ENCODE measurements at regions of chr16 and their contacts with region 1.

Region 1: DNA sequence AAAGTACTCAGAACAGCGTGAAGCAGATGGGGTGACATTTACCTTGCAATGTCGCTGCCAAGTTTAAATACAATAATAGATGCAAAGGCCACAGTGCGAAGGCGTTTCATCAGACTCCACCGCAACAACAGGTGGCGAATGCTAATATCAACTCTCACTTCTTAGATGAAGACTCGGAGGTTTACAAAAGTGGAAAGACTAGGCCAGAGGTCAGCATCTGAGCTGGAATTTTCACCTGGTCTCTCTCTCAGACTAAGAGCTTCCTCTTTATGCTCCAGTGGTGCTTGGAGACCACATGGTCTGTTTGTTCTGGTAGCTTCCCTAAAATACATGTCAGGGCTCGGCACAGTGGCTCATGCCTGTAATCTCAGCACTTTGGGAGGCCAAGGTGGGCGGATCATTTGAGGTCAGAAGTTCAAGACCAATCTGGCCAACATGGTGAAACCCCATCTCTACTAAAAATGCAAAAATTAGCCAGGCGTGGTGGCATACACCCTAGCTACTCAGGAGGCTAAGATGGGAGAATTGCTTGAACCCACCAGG is 169.1 kb downstream of the XYLT1 start:
- DNase-seq: peak; percentile 99
- H3K4me3 ChIP-seq: peak overlapping the region; percentile 45
- H3K27ac ChIP-seq: peak overlapping the region; percentile 99
- H3K4me1 ChIP-seq: peaks cover 85% of the 10 kb centered on the region
- CTCF ChIP-seq: no peak

Region 2: GRCh38 chr16:16974198-16974597 is 327.5 kb before region 1 on chr16:
- CTCF ChIA-PET with region 1: no interaction called
- POLR2A ChIA-PET with region 1: no interaction called
- intact Hi-C with region 1: no loop called
- DNase-seq: no peak
- H3K4me3 ChIP-seq: no peak overlapping the region
- H3K27ac ChIP-seq: no peak overlapping the region
- H3K4me1 ChIP-seq: no peaks in the 10 kb centered on the region
- CTCF ChIP-seq: no peak

Region 3: DNA sequence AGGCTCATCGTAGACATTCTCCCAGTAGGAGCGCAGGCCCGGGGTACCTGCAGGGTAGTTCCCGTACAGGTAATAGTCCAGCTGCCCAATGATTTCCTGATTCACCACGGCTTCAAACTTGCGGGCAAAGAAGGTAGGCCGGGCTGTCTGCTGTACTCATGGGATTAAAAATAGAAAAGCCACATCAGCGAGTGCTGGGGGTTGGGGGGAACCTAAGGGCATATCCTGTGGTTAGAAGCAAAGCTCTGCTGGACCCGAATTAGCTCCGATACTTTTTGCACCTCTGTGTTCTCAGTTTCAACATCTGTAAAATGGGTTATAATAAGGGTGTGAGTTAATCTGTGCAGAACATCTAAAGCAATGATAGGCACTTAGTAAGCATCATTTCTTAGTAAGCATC is 167.1 kb before region 1 on chr16:
- CTCF ChIA-PET with region 1: no interaction called
- POLR2A ChIA-PET with region 1: no interaction called
- intact Hi-C with region 1: loop called (anchors 2 kb)
- DNase-seq: peak; percentile 66
- H3K4me3 ChIP-seq: no peak overlapping the region
- H3K27ac ChIP-seq: peak overlapping the region; percentile 42
- H3K4me1 ChIP-seq: peaks cover 40% of the 10 kb centered on the region
- CTCF ChIP-seq: no peak

Region 4: DNA sequence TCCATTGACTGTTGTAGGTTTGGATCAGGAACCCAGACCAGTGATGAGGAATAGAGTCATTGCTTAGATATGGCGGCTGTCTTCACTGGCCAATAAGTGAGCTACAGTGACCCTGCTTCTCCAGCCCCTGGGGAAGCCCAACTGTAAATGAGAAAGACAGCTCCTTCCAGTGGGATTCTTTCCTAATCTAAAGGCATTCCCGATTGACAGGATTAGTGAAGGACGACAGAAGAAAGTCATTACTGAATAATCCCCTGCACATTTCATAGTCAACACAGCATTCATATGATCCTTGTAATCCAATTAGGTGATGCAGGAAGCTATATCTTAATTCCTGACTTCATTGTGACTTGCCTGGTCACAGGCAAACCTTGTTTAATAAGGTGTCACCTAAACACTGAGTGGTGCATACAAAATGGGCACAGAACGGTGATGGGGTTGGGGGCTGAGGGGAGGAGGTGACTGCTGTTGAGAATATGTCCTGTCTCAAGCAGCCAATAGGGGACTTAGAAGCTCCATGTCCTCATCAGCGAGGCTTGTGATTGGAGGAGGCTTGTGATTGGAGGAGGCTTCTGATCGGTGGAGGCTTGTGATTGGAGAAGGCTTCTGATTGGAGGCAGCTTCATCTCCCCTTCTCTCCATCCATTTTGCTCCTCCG is 73.5 kb before region 1 on chr16:
- CTCF ChIA-PET with region 1: no interaction called
- POLR2A ChIA-PET with region 1: no interaction called
- intact Hi-C with region 1: no loop called
- DNase-seq: no peak
- H3K4me3 ChIP-seq: no peak overlapping the region
- H3K27ac ChIP-seq: no peak overlapping the region
- H3K4me1 ChIP-seq: peaks cover 28% of the 10 kb centered on the region
- CTCF ChIP-seq: no peak

Region 5: DNA sequence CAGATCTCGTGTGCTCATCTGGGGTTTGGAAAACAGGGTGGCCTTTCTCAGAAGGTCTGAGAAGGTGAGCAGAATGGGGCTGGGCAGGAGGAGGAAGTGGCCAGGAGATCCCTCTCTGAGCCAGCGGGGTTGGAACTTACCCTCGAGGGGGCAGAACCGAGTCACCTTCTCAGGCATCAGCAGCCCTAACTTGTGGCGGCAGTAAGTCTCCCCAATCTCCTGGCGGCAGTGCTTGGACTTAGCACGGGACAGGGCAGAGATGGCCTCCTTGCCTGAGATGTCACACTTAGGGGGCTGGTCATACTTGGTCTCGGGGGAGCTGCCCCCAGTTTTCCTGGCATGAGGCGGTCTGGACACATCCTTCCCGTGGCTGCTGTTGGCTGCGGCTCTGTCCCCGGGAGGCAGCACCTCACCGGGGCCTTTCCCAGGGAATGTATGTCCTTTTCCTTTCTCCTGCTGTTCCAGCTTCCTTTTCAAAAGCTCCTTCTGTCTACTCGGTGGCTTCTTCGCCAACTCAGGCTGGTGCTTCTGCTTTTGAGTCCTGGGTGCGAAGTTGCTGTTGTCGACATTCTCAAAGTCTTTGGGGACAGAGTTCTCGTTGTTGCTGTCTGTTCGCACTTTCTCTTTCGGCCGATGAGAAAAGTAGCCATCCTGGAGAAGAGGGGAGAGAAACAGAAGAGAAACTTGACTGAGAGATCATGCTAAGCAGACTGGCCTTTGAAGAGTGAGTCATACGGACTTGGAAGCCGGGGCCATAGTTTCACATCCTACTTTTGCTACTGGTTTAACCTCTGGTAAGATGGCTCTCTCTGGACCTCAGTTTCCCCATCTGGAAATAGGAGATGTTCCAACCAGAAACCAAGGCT is 42.6 kb before region 1 on chr16:
- CTCF ChIA-PET with region 1: no interaction called
- POLR2A ChIA-PET with region 1: interaction called, 7 read pairs
- intact Hi-C with region 1: loop called (anchors 2 kb)
- DNase-seq: peak; percentile 64
- H3K4me3 ChIP-seq: peak overlapping the region; percentile 10
- H3K27ac ChIP-seq: peak overlapping the region; percentile 50
- H3K4me1 ChIP-seq: peaks cover 33% of the 10 kb centered on the region
- CTCF ChIP-seq: peak; percentile 66

Region 6: DNA sequence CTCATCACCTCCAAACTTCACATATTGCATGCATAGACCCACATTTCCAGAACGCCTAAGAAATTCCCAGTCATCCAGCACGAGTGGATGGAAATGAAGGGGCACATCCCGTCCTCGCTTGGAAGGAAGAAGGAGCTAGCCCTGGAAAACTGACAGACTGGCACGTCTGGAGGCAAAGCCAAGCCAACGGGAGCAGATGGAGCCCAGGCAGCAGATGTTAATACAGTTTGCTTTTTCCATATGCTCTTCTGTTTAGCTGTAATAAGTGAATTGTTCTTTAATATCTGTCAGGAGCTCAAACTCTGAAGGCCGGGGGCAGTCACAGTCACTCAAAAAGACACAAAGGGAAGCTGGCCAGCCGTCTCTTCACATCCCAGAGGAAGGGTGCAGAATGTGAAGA is 18.6 kb before region 1 on chr16:
- CTCF ChIA-PET with region 1: interaction called, 8 read pairs
- POLR2A ChIA-PET with region 1: interaction called, 47 read pairs
- intact Hi-C with region 1: loop called (anchors 1 kb)
- DNase-seq: no peak
- H3K4me3 ChIP-seq: peak overlapping the region; percentile 48
- H3K27ac ChIP-seq: peak overlapping the region; percentile 60
- H3K4me1 ChIP-seq: peaks cover 83% of the 10 kb centered on the region
- CTCF ChIP-seq: no peak

Region 7: GRCh38 chr16:17397499-17397891 is 95.8 kb after region 1 on chr16:
- CTCF ChIA-PET with region 1: no interaction called
- POLR2A ChIA-PET with region 1: no interaction called
- intact Hi-C with region 1: no loop called
- DNase-seq: no peak
- H3K4me3 ChIP-seq: no peak overlapping the region
- H3K27ac ChIP-seq: no peak overlapping the region
- H3K4me1 ChIP-seq: peaks cover 11% of the 10 kb centered on the region
- CTCF ChIP-seq: no peak

Region 8: DNA sequence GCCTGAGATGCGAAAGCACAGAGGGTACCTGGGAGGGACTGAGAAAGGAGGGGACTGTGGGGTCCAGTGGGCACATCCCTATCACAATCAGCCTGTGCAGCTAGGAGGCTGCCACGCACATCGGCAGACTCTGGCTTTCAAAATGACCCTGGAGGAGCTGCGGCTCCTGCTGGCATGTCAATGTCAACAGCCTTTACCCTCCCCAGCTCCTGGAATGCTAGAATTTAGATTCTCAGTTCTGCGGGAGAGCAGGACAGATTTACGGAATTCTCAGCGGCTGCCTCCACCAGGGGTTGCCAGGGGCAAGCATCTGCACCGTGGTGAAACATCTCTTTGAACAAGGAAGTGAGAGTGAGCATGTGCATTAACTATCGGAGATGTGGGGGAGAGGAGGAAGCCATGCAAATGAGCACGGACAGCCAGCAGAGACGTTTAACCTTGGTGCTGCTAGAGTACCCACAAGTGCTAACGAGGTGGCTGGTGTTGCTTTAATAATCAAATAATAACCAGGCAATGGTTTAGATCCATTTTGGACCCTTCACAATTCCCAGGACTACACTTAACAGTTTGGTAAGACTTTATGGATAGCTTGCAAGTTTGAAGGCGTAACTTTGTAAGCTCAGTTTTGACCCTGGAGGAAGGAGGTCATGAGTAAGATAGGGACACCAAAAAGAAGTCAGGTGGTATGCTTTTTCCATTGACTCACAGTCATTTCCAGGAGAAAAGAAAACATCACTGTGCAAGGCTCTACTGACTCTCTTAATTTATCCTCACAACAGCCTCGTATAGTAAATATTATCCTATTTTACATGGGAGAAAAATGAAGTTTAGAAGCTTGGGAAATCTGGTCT is 115.0 kb after region 1 on chr16:
- CTCF ChIA-PET with region 1: no interaction called
- POLR2A ChIA-PET with region 1: interaction called, 5 read pairs
- intact Hi-C with region 1: loop called (anchors 1 kb)
- DNase-seq: peak; percentile 92
- H3K4me3 ChIP-seq: peak overlapping the region; percentile 64
- H3K27ac ChIP-seq: peak overlapping the region; percentile 87
- H3K4me1 ChIP-seq: peaks cover 50% of the 10 kb centered on the region
- CTCF ChIP-seq: peak; percentile 70

Region 9: GRCh38 chr16:17467923-17468540 is 166.4 kb after region 1 on chr16:
- CTCF ChIA-PET with region 1: interaction called, 7 read pairs
- POLR2A ChIA-PET with region 1: interaction called, 28 read pairs
- intact Hi-C with region 1: no loop called
- DNase-seq: peak; percentile 63
- H3K4me3 ChIP-seq: peak overlapping the region; percentile 94
- H3K27ac ChIP-seq: peak overlapping the region; percentile 70
- H3K4me1 ChIP-seq: peaks cover 55% of the 10 kb centered on the region
- CTCF ChIP-seq: peak; percentile 89

Measured in OCI-LY7 (cell line).